CD8-positive, alpha-beta memory T cell (primary cell): ENCODE measurements at regions of chr12 and their contacts with region 1.

Region 1: DNA sequence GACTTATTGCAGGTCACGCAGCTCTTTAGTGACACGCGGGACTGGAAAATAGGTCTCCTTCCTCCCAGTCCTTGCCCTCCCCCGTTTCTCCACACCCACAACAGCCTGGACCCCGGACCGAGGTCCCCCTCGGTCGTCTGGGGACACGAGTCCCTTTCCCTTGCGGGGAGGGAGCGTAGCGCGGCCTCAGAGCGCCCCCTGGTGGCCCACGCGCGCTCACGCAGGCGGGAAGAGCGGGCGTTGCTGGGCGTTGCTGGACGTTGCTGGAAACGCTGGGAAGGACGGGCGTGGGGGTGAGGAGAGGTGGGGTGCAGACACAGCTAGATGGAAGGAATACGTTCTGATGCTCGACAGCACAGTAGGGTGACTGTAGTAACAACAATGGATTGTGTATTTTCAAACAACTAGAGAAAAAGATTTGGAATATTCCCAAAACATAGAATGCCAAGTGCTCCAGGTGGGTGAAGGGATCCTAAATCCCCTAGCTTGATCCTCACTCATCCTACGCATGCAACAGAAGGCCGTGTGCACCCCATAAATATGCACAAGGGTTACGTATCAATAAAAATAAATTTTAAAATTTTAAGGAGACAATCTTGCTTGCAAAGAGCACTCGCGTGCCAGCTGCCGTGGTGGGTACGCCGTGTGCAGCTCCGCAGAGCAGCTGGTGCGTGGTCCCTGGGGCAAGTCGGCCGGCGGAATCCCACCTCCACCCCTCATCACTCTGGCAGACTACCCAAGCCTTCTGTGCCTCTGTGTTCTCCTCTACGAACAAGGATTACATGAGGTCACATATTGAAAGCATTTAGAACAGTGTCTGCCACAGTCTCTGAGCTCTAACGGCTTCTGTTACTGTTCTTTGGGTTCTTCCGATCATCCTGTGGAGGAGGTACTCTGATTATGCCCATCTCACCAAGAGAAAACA is 87.4 kb downstream of the B4GALNT3 start:
- DNase-seq: peak; percentile 58 to 78 (median 60)
- H3K4me3 ChIP-seq: no peak overlapping the region
- H3K4me3 Mint-ChIP-seq: no peak overlapping the region
- H3K27ac ChIP-seq: no peak overlapping the region
- H3K27ac Mint-ChIP-seq: peak overlapping the region in 1 of 8 donors; percentile 64
- H3K4me1 ChIP-seq: peaks cover 12% of the 10 kb centered on the region
- H3K4me1 Mint-ChIP-seq: peaks cover 20 to 39% (median 20%) of the 10 kb centered on the region in 3 donors
- H3K27me3 ChIP-seq: peaks cover 7% of the 10 kb centered on the region
- H3K27me3 Mint-ChIP-seq: peaks cover 4 to 18% of the 10 kb centered on the region in 2 donors

Region 2: DNA sequence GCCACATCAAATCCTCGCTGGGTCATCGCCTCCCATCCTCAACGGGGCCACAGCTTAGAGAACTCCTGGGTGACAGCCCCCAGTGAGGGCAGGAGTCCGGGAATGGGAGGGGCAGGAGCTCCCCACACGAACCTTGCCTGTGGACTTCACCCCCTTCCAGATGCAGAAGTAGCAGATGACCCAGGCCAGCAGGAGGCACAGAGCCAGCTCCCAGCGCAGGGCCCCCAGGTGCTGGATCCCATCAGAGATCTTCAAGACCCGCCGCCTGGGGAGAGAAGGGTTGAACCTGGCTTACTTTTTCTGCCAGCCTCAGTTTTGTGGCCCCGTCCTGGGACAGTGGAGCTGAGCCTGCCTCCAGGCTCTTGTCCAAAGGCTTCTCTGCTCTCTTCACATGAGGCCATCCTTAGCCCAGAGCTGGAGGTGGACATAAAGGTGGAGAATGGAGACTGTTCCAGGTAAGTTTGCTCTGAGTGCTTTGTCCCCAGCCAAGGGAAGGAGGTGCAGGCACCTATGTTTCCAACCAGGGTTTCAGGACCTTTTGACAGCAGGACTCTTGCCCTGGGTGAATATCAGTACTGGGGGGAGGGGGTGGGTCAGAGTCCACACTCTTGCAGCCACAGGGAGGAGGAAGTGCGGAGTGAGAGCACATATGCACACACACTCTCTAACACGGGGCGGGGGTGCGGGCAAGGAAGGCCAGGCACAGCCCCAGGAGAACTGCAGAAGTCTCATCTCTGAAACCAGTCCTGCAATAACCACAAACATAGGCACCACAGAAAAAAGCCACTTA is 310.0 kb before region 1 on chr12:
- CTCF ChIA-PET with region 1: no interaction called
- POLR2A ChIA-PET with region 1: no interaction called
- DNase-seq: no peak
- H3K4me3 ChIP-seq: no peak overlapping the region
- H3K4me3 Mint-ChIP-seq: no peak overlapping the region
- H3K27ac ChIP-seq: no peak overlapping the region
- H3K27ac Mint-ChIP-seq: no peak overlapping the region
- H3K4me1 ChIP-seq: no peaks in the 10 kb centered on the region
- H3K4me1 Mint-ChIP-seq: no peaks in the 10 kb centered on the region
- H3K27me3 ChIP-seq: no peaks in the 10 kb centered on the region
- H3K27me3 Mint-ChIP-seq: peaks cover 19 to 34% of the 10 kb centered on the region in 2 donors

Region 3: GRCh38 chr12:442235-442884 is 104.8 kb before region 1 on chr12:
- CTCF ChIA-PET with region 1: interaction called, 21 read pairs
- POLR2A ChIA-PET with region 1: no interaction called
- DNase-seq: peak; percentile 15 to 53 (median 33)
- H3K4me3 ChIP-seq: no peak overlapping the region
- H3K4me3 Mint-ChIP-seq: no peak overlapping the region
- H3K27ac ChIP-seq: no peak overlapping the region
- H3K27ac Mint-ChIP-seq: peak overlapping the region in 1 of 8 donors; percentile 8
- H3K4me1 ChIP-seq: no peaks in the 10 kb centered on the region
- H3K4me1 Mint-ChIP-seq: peaks cover 0 to 6% (median 0%) of the 10 kb centered on the region in 3 donors
- H3K27me3 ChIP-seq: no peaks in the 10 kb centered on the region
- H3K27me3 Mint-ChIP-seq: peaks cover 0 to 11% of the 10 kb centered on the region in 2 donors

Region 4: DNA sequence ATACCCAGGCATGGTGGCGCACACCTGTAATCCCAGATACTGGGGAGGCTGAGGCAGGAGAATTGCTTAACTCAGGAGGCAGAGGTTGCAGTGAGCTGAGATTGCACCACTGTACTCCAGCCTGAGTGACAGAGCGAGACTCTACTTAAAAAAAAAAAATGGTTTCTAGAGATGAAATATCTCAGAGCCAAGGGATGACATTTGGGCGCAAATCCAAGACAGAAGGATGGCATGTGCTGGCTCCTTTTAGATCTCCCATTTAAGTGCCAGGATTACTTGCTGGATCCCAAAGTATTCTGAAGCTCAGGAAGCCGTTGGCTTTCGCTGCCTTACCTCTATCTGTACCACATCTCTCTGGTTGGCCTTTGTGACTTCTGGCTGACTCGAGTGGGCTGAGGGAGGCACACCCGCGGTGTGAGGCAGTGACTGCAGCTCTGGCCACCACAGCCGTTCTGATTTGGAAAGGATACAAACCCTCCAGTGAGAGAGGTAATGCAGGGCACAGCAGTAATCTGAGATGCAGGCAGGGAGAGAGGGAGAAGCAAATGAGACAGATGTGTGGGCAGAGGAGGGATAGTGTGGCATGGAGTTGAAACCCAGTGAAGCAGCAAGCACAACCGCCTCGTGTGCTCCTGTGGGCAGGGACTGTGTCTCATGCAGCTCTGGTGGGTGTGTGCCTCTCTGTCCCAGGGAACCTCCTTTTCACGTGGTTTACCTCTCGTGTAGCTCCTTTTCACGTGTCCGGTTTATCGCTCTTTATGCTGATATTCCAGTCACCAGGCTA is 82.5 kb before region 1 on chr12:
- CTCF ChIA-PET with region 1: interaction called, 12 read pairs
- POLR2A ChIA-PET with region 1: no interaction called
- DNase-seq: no peak
- H3K4me3 ChIP-seq: no peak overlapping the region
- H3K4me3 Mint-ChIP-seq: peak overlapping the region in 2 of 7 donors; percentile 15 to 23
- H3K27ac ChIP-seq: no peak overlapping the region
- H3K27ac Mint-ChIP-seq: peak overlapping the region in 1 of 8 donors; percentile 88
- H3K4me1 ChIP-seq: no peaks in the 10 kb centered on the region
- H3K4me1 Mint-ChIP-seq: peaks cover 35 to 42% (median 41%) of the 10 kb centered on the region in 3 donors
- H3K27me3 ChIP-seq: no peaks in the 10 kb centered on the region
- H3K27me3 Mint-ChIP-seq: peaks cover 0 to 5% of the 10 kb centered on the region in 2 donors

Region 5: GRCh38 chr12:601976-602699 is 55.0 kb after region 1 on chr12:
- CTCF ChIA-PET with region 1: no interaction called
- POLR2A ChIA-PET with region 1: no interaction called
- DNase-seq: no peak
- H3K4me3 ChIP-seq: no peak overlapping the region
- H3K4me3 Mint-ChIP-seq: no peak overlapping the region
- H3K27ac ChIP-seq: no peak overlapping the region
- H3K27ac Mint-ChIP-seq: no peak overlapping the region
- H3K4me1 ChIP-seq: peaks cover under 1% of the 10 kb centered on the region
- H3K4me1 Mint-ChIP-seq: peaks cover under 1 to 7% (median 1%) of the 10 kb centered on the region in 3 donors
- H3K27me3 ChIP-seq: no peaks in the 10 kb centered on the region
- H3K27me3 Mint-ChIP-seq: no peaks in the 10 kb centered on the region

Region 6: GRCh38 chr12:614411-614970 is 67.3 kb after region 1 on chr12:
- CTCF ChIA-PET with region 1: no interaction called
- POLR2A ChIA-PET with region 1: no interaction called
- DNase-seq: peak in 3 of 5 donors; percentile 2 to 56 (median 19)
- H3K4me3 ChIP-seq: no peak overlapping the region
- H3K4me3 Mint-ChIP-seq: no peak overlapping the region
- H3K27ac ChIP-seq: no peak overlapping the region
- H3K27ac Mint-ChIP-seq: peak overlapping the region in 1 of 8 donors; percentile 84
- H3K4me1 ChIP-seq: peaks cover 16% of the 10 kb centered on the region
- H3K4me1 Mint-ChIP-seq: peaks cover 23 to 32% (median 28%) of the 10 kb centered on the region in 3 donors
- H3K27me3 ChIP-seq: no peaks in the 10 kb centered on the region
- H3K27me3 Mint-ChIP-seq: no peaks in the 10 kb centered on the region

Region 7: GRCh38 chr12:674272-674781 is 127.1 kb after region 1 on chr12:
- CTCF ChIA-PET with region 1: no interaction called
- POLR2A ChIA-PET with region 1: no interaction called
- DNase-seq: peak; percentile 49 to 85 (median 72)
- H3K4me3 ChIP-seq: peak overlapping the region; percentile 43
- H3K4me3 Mint-ChIP-seq: peak overlapping the region; percentile 70 to 92 (median 81)
- H3K27ac ChIP-seq: peak overlapping the region; percentile 82
- H3K27ac Mint-ChIP-seq: peak overlapping the region; percentile 93 to 99 (median 97)
- H3K4me1 ChIP-seq: peaks cover 42% of the 10 kb centered on the region
- H3K4me1 Mint-ChIP-seq: peaks cover 63 to 78% (median 76%) of the 10 kb centered on the region in 3 donors
- H3K27me3 ChIP-seq: no peaks in the 10 kb centered on the region
- H3K27me3 Mint-ChIP-seq: peaks cover 0 to 2% of the 10 kb centered on the region in 2 donors